ENCODE measurements at regions of chr5 and their contacts with region 1.

Region 1: GRCh38 chr5:140639148-140639979 is at the start of gene TMCO6:
- DNase-seq: peak; percentile 93
- H3K4me3 Mint-ChIP-seq: peak within 1 kb of the TSS; percentile 94
- H3K27ac Mint-ChIP-seq: peak within 1 kb of the TSS; percentile 93
- H3K4me1 Mint-ChIP-seq: peaks cover 26% of the 10 kb centered on the region
- H3K27me3 Mint-ChIP-seq: no peaks in the 10 kb centered on the region
- total RNA-seq, gene TMCO6: 40.2 and 40.7 TPM in 2 replicates

Region 2: DNA sequence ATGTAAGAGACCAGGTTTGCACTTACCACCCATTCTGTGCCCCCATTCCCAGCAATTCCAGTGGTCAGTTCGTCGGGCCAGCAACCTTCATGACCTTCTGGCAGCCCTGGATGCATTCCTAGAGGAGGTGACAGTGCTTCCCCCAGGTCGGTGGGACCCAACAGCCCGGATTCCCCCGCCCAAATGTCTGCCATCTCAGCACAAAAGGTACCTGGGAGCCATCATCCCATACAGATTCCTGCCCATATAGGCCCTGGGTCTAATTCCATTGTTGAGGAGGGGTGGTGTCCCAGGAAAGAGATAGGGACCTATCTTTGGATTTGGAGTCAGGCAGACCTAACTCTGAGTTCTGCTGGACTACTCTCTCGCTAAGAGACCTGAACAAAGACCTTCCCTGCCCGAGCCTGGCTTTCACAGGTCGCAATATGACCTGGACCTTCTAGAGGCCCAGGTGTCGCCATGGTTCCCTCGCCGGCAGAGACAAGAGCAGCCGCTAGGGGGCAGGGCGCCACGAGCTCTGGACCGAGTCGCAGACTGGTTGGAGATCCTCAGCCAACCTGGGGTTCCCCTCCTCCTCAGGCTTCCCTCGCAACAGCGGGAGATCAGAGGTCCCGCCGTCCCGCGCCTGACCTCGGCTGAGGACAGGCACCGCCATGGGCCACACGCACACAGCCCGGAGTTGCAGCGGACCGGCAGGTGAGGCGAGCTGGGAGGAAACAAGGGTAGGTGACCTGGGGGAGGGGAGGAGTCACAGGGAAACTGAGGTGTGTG is 276.3 kb before region 1 on chr5:
- intact Hi-C with region 1: loop called (anchors 5 kb)
- DNase-seq: peak; percentile 74
- H3K4me3 Mint-ChIP-seq: peak overlapping the region; percentile 67
- H3K27ac Mint-ChIP-seq: peak overlapping the region; percentile 24
- H3K4me1 Mint-ChIP-seq: peaks cover 6% of the 10 kb centered on the region
- H3K27me3 Mint-ChIP-seq: peaks cover 5% of the 10 kb centered on the region

Region 3: DNA sequence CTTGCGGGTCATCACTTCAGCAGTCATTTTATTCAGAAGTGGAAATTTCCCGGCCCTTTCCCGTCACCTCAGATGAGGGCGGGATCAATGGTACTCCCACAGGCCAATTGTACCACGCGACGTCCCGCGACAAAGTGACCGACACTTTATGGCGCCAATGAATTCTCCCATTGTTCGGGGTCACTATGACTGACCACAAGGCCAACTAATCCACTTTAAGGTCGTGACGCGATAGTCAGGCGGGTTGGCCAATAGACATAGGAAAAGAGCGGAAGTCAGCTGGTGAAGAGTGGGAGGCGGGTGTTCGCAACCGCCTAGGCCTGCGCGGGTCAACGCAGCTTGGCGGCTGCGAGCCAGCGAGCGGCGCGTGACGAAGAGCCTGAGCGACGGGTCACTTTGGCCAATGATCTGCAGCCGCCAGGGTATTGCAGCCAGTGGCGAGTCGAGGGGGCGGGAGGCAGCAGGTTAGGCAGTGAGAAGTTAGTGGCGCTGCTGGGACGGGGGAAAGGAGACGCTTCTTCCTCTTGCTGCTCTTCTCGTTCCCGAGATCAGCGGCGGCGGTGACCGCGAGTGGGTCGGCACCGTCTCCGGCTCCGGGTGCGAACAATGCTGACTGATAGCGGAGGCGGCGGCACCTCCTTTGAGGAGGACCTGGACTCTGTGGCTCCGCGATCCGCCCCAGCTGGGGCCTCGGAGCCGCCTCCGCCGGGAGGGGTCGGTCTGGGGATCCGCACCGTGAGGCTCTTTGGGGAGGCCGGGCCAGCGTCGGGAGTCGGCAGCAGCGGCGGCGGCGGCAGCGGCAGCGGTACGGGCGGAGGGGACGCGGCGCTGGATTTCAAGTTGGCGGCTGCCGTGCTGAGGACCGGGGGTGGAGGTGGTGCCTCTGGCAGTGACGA is 237.8 kb before region 1 on chr5 and contains the start of gene ANKHD1:
- intact Hi-C with region 1: loop called (anchors 2 kb)
- DNase-seq: peak; percentile 97
- H3K4me3 Mint-ChIP-seq: no peak within 1 kb of the TSS
- H3K27ac Mint-ChIP-seq: no peak within 1 kb of the TSS
- H3K4me1 Mint-ChIP-seq: peaks cover 20% of the 10 kb centered on the region
- H3K27me3 Mint-ChIP-seq: no peaks in the 10 kb centered on the region
- total RNA-seq, gene ANKHD1: 119 and 120 TPM in 2 replicates

Region 4: DNA sequence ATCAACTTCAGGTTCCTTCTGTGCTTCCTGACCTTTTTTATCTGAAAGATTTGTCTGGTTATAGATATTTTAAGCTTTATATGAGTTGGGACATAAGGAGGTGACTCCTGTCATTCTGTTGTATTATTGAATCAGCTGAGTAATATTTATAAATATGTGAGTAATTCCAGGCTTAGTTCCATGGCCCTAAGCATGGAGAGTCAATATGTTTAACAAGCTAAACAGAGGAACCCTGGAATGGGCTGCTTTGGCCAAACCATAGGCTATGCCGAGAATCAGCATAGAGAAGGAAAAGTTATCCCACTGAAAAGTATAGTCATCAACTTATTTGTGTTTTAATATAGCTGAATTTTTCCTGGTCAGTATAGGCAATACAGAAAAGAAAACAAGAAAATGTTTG is 99.1 kb before region 1 on chr5:
- intact Hi-C with region 1: no loop called
- DNase-seq: no peak
- H3K4me3 Mint-ChIP-seq: no peak overlapping the region
- H3K27ac Mint-ChIP-seq: no peak overlapping the region
- H3K4me1 Mint-ChIP-seq: no peaks in the 10 kb centered on the region
- H3K27me3 Mint-ChIP-seq: no peaks in the 10 kb centered on the region

Region 5: GRCh38 chr5:140557136-140557805 is 82.1 kb before region 1 on chr5 and contains the start of gene SRA1:
- intact Hi-C with region 1: loop called (anchors 2 kb)
- DNase-seq: peak; percentile 84
- H3K4me3 Mint-ChIP-seq: peak within 1 kb of the TSS; percentile 83
- H3K27ac Mint-ChIP-seq: peak within 1 kb of the TSS; percentile 82
- H3K4me1 Mint-ChIP-seq: peaks cover 41% of the 10 kb centered on the region
- H3K27me3 Mint-ChIP-seq: no peaks in the 10 kb centered on the region
- total RNA-seq, gene SRA1: 45.9 and 48.2 TPM in 2 replicates

Region 6: GRCh38 chr5:140664359-140665119 is 25.2 kb after region 1 on chr5 and contains the start of gene WDR55:
- intact Hi-C with region 1: loop called (anchors 1 kb)
- DNase-seq: peak; percentile 94
- H3K4me3 Mint-ChIP-seq: peak within 1 kb of the TSS; percentile 99
- H3K27ac Mint-ChIP-seq: peak within 1 kb of the TSS; percentile 95
- H3K4me1 Mint-ChIP-seq: peaks cover 25% of the 10 kb centered on the region
- H3K27me3 Mint-ChIP-seq: no peaks in the 10 kb centered on the region
- total RNA-seq, gene WDR55: 39.1 and 40.0 TPM in 2 replicates

Region 7: DNA sequence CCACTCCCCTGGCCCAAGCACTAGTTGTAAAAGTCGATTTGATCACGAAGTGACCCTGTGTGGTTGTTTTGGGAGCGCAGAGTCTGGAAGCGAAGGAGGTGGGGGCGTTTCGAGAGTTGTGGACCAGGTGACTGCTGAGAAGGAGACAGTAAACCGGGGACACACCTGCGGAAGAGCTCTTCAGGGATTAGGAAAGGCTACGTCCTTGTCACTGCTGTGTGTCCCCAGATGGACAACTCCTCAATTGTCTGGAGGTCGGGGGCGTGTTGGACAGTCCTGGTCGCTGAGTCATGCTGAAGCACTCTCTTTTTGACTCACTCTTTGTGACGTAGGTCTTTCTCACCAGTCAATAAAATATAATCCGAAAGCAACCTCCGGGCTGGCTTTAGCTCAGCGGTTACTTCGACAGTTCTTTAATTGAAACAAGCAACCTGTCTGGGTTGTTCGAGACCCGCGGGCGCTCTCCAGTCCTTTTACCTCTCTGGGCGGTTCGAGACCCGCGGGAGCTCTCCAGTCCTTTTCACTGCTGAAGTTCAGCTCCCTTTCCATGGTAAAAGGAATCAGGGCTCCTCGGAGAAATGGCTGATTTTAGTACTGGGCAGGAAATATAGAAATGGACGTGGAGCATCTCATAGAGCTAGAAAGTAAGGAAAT is 71.7 kb after region 1 on chr5:
- intact Hi-C with region 1: loop called (anchors 2 kb)
- DNase-seq: peak; percentile 88
- H3K4me3 Mint-ChIP-seq: peak overlapping the region; percentile 89
- H3K27ac Mint-ChIP-seq: peak overlapping the region; percentile 91
- H3K4me1 Mint-ChIP-seq: peaks cover 16% of the 10 kb centered on the region
- H3K27me3 Mint-ChIP-seq: no peaks in the 10 kb centered on the region

Region 8: DNA sequence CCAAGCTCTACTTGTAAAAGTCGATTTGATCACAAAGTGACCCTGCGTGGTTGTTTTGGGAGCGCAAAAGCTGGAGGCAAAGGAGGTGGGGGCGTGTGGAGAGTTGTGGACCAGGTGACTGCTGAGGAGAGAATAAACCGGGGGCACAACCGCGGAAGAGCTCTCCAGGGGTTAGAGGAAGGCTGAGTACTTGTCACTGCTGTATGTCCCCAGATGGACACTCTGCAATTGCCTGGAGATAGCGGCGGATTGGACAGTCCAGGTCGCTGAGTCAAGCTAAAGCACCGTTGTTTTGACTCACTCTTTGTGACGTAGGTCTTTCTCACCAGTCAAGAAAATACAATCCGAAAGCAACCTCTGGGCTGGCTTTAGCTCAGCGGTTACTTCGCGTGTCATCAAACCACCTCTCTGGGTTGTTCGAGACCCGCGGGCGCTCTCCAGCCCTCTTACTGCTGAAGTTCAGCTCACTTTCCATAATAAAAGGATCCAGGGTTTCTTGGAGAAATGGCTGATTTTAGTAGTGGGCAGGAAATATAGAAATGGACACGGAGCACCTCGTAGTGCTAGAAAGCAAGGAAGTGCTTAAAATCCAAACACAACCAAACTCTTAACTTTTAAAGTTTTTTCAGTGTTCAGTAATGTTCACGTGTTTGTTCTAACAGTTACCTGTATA is 86.6 kb after region 1 on chr5:
- intact Hi-C with region 1: no loop called
- DNase-seq: peak; percentile 75
- H3K4me3 Mint-ChIP-seq: peak overlapping the region; percentile 76
- H3K27ac Mint-ChIP-seq: peak overlapping the region; percentile 61
- H3K4me1 Mint-ChIP-seq: peaks cover 5% of the 10 kb centered on the region
- H3K27me3 Mint-ChIP-seq: peaks cover 10% of the 10 kb centered on the region

Measured in activated T-helper 2 cell treated with anti-CD3 and anti-CD28 coated beads, Interferon-gamma antibody, Interleukin-2, Interleukin-4, amounts not matched to agents 10 μg/mL and 5 μg/mL and 100 μg/mL, durations not matched to agents 14 hours and 24 hours and 36 hours (primary cell).